AG04449 (cell line): ENCODE measurements at regions of chr5 and their contacts with region 1.

Region 1: GRCh38 chr5:145887976-145888574 is 15.3 kb upstream of the GRXCR2 start:
- DNase-seq: no peak
- H3K4me3 ChIP-seq: no peak overlapping the region
- CTCF ChIP-seq: peak; percentile 85

Region 2: GRCh38 chr5:144203750-144204596 is 1684.1 kb before region 1 on chr5:
- CTCF ChIA-PET with region 1: interaction called, 12 read pairs
- POLR2A ChIA-PET with region 1: no interaction called
- DNase-seq: no peak
- H3K4me3 ChIP-seq: no peak overlapping the region
- CTCF ChIP-seq: peak; percentile 63

Region 3: DNA sequence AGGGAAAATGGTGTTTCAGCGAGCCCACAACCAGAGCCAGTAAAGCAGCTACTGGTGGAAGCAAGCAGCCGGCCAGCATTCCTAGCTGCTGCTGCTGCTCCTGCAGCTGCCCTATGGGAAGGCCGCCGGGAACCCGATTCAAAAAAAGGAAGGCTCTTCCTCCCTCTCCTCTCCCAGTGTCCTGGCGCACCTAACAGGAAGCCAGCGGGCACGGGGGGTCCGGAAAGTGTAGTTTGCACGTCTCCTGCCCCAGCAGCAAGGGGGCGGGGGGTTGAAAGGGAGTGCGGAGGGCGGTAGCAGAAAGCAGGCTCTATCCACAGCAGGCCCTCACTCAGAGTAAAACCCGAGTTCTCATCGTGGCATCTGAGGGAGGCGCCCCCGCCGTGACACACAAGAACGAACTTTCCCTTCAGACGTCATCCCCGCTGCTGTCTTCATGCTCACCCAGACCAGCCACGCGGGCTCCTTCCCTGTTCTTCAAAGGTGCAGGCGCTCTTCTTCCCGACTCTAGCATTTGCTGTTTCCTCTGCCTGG is 31.7 kb before region 1 on chr5:
- CTCF ChIA-PET with region 1: interaction called, 12 read pairs
- POLR2A ChIA-PET with region 1: no interaction called
- DNase-seq: peak; percentile 17
- H3K4me3 ChIP-seq: peak overlapping the region; percentile 26
- CTCF ChIP-seq: no peak

Region 4: DNA sequence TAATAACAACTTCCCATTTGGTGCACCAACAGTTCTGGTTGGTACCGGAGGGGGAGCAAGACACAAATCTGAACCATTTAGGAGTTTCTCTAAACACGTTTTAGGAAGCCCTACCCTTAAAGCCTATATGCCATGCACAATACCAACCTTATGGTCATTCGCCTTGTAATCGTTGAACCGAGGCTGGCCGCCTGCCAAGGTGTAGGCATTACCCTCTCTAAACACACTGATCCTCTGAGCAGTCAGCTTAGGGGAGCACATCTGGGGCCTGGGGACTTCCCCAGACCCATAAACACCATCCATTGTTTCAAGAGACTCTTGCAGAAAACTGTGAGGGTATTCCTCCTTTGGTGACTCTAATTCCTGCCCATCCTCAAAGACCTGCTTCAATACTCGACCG is 15.6 kb before region 1 on chr5:
- CTCF ChIA-PET with region 1: interaction called, 76 read pairs
- POLR2A ChIA-PET with region 1: no interaction called
- DNase-seq: no peak
- H3K4me3 ChIP-seq: no peak overlapping the region
- CTCF ChIP-seq: no peak

Region 5: DNA sequence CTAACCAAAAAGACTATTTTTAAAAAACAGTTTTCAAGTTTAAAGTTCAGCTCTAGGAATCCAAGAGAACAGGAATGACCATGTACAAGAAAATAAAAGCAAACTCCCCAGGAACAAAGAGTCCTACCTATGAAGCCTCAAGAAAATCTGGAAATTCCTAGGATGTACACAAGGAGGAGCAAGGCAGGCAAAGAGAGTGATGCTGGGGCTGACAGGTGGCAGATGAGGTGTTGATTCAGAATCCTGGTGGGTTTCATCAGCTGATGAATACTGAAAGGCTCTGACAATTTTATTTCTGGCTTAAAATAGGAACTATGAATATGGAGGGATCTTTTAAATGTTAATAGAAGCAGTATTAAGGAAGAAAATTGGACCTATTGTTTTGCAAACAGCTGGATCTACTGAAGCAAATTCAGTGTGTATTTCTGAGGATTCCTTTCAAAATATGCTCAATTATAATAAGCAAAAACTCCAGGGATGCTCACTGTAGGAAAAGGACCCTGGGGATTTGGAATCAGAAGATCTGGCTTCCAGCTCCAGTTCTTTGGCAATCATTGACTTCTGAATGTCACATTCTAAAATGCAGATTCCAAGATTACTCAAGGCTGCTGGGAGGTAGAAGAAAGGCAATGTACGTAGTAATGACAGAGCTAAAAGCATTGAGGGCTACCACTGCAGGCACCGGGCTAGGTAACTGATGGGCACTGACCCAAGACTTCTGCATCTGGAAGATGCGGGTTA is 20.3 kb after region 1 on chr5:
- CTCF ChIA-PET with region 1: interaction called, 28 read pairs
- POLR2A ChIA-PET with region 1: no interaction called
- DNase-seq: no peak
- H3K4me3 ChIP-seq: no peak overlapping the region
- CTCF ChIP-seq: no peak

Region 6: DNA sequence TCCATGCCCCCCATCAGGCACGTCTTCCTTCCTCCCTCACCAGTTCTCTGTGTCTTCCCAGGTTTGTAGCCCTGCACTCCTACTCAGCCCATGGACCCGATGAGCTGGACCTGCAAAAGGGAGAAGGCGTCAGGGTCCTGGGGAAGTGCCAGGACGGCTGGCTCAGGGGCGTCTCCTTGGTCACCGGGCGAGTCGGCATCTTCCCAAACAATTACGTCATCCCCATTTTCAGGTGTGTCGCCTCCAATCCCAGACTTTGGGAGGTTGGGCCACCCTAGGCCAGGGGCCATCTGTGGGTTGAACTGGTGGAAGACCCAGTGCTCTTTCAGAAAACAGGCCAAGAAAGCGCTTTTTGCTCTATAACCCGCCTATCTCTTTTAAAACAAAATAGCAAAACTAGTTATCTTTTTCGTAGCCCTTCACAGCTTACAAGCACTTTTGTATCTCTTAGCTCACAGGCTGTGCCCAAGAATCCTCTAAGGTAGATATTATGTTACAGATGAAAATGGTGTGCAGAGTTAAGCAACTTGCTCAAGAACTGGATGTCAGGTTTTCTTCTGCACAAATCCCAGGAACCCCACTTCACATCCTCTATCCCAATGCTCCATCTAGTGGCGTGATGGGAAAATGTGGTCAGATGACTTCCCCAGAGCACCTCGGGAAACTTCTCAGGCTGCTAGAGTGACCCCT is 161.1 kb after region 1 on chr5:
- CTCF ChIA-PET with region 1: interaction called, 32 read pairs
- POLR2A ChIA-PET with region 1: no interaction called
- DNase-seq: peak; percentile 46
- H3K4me3 ChIP-seq: no peak overlapping the region
- CTCF ChIP-seq: peak; percentile 77